ENCODE measurements at regions of chr18 and their contacts with region 1.

Region 1: GRCh38 chr18:43661570-43661969 is 384.3 kb upstream of the SYT4 start:
- DNase-seq: peak; percentile 64
- ATAC-seq: peak; percentile 94
- H3K4me3 ChIP-seq: no peak overlapping the region
- H3K27ac ChIP-seq: no peak overlapping the region
- H3K4me1 ChIP-seq: peaks cover 11% of the 10 kb centered on the region
- H3K27me3 ChIP-seq: no peaks in the 10 kb centered on the region
- CTCF ChIP-seq: peak; percentile 64

Region 2: GRCh38 chr18:43714343-43715010 is 52.9 kb after region 1 on chr18:
- CTCF ChIA-PET with region 1: no interaction called
- POLR2A ChIA-PET with region 1: no interaction called
- intact Hi-C with region 1: no loop called
- DNase-seq: no peak
- ATAC-seq: no peak
- H3K4me3 ChIP-seq: no peak overlapping the region
- H3K27ac ChIP-seq: no peak overlapping the region
- H3K4me1 ChIP-seq: peaks cover 5% of the 10 kb centered on the region
- H3K27me3 ChIP-seq: no peaks in the 10 kb centered on the region
- CTCF ChIP-seq: no peak

Region 3: GRCh38 chr18:43777636-43778304 is 116.2 kb after region 1 on chr18:
- CTCF ChIA-PET with region 1: interaction called, 3 read pairs
- POLR2A ChIA-PET with region 1: no interaction called
- intact Hi-C with region 1: loop called (anchors 1 kb)
- DNase-seq: no peak
- ATAC-seq: no peak
- H3K4me3 ChIP-seq: no peak overlapping the region
- H3K27ac ChIP-seq: no peak overlapping the region
- H3K4me1 ChIP-seq: peaks cover 24% of the 10 kb centered on the region
- H3K27me3 ChIP-seq: no peaks in the 10 kb centered on the region
- CTCF ChIP-seq: no peak